HepG2 (cell line): ENCODE measurements at regions of chr19 and their contacts with region 1.

Region 1: DNA sequence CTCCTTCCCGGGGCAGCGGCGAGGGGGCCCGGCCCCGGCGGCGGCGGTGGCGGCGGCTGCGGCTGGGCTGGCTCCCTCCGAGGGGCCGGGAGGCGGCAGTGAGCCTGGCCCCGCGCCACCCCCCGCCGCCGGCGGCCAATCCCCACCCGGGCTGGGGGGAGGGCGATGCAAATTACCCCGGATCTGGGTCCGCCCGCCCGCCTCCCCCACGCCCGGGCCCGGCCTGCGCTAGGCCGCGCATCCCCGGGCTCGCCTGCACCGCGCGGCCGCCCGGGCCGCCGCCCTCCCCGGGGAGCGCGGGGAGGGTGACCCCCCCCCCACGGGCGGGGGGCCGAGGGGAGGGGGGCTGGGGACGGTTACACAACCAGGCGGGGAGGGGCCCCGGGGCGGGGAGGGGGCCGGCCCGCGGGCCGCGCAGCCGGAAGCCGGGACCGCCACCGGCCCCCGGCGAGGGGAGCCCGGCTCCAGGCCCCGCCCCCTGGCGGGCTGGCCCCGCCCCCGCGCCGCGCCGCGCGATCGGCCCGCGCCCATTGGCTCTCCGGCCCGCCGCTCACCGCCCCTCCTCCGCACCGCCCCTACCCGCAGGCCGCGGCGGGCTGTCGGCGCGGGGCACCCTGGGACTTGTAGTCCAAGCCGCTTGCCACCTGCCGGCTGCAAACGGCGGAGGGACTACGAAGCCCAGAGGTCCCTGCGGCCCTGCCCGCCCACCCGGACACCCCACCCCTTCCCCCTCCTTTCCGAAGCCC is 1.1 kb downstream of the ZBTB7A start:
- DNase-seq: peak; percentile 90
- ATAC-seq: peak; percentile 59
- H3K4me3 ChIP-seq: peak overlapping the region in 2 of 3 experiments; percentile 84 to 94; a peak in 3 of 6 replicates
- H3K27ac ChIP-seq: no peak overlapping the region
- H3K4me1 ChIP-seq: peaks cover 50% of the 10 kb centered on the region
- H3K27me3 ChIP-seq: no peaks in the 10 kb centered on the region
- CTCF ChIP-seq: no peak
- EP300 ChIP-seq: no peak
- POLR2A ChIP-seq: peak in 1 of 2 experiments; percentile 11; a peak in 1 of 4 replicates
- RAD21 ChIP-seq: no peak

Region 2: GRCh38 chr19:4035582-4035981 is 30.0 kb before region 1 on chr19:
- CTCF ChIA-PET with region 1: no interaction called
- POLR2A ChIA-PET with region 1: no interaction called
- in situ Hi-C with region 1: no loop called
- intact Hi-C with region 1: no loop called
- DNase-seq: no peak
- ATAC-seq: no peak
- H3K4me3 ChIP-seq: no peak overlapping the region
- H3K27ac ChIP-seq: no peak overlapping the region
- H3K4me1 ChIP-seq: no peaks in the 10 kb centered on the region
- H3K27me3 ChIP-seq: no peaks in the 10 kb centered on the region; a peak in 1 of 5 replicates
- CTCF ChIP-seq: no peak
- EP300 ChIP-seq: no peak
- POLR2A ChIP-seq: no peak
- RAD21 ChIP-seq: no peak

Region 3: GRCh38 chr19:4052050-4052999 is 13.3 kb before region 1 on chr19:
- CTCF ChIA-PET with region 1: no interaction called
- POLR2A ChIA-PET with region 1: interaction called, 19 read pairs
- in situ Hi-C with region 1: no loop called
- intact Hi-C with region 1: no loop called
- DNase-seq: peak; percentile 95
- ATAC-seq: peak; percentile 86
- H3K4me3 ChIP-seq: peak overlapping the region; percentile 42 to 70 (median 44); a peak in 5 of 6 replicates
- H3K27ac ChIP-seq: peak overlapping the region; percentile 99
- H3K4me1 ChIP-seq: peaks cover 33% of the 10 kb centered on the region
- H3K27me3 ChIP-seq: no peaks in the 10 kb centered on the region
- CTCF ChIP-seq: no peak; the same call in none of the 2 replicates
- EP300 ChIP-seq: peak; percentile 76 to 84; a peak in 3 of 4 replicates
- POLR2A ChIP-seq: peak; percentile 67; a peak in 3 of 4 replicates
- RAD21 ChIP-seq: peak; percentile 74

Region 4: DNA sequence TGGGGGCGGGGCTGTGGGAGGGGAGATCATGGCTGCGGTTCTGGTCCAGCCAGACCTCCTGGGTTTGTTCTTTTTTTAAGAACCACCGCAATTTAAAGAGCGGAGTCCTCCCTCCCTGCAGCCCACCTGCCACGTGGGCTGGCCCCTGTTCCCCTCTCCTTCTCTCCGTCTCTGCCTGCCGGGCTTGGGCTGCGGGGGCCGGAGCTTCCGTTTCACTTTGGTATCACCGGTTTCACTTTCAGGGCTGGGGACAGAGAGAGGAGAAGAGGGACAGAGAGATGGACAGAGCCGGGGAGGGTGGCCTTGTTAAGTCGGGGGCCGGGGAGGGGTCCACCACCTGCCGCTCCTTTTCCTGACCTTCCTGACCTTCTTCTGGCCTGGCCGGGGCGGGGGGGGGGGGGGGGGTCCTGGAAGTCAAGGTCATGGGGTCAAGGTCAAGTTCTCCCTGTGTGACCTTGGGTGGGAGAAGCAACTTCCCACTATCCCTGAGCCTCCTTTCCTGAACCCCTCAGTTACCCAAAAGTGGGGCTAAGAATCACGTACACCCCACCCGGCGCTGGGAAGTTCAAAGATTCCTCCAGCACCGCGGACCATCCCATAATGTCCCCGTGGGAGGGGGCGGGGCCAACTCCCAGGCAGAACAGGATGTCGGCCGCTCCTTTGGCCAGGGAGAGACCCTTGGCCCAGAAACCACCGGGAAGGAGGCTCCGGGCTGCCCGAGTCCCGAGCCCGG is 12.4 kb after region 1 on chr19:
- CTCF ChIA-PET with region 1: no interaction called
- POLR2A ChIA-PET with region 1: interaction called, 15 read pairs
- in situ Hi-C with region 1: no loop called
- intact Hi-C with region 1: no loop called
- DNase-seq: no peak
- ATAC-seq: peak; percentile 73
- H3K4me3 ChIP-seq: peak overlapping the region; percentile 78 to 100 (median 81)
- H3K27ac ChIP-seq: no peak overlapping the region
- H3K4me1 ChIP-seq: peaks cover 37% of the 10 kb centered on the region
- H3K27me3 ChIP-seq: no peaks in the 10 kb centered on the region
- CTCF ChIP-seq: no peak
- EP300 ChIP-seq: no peak
- POLR2A ChIP-seq: peak in 1 of 2 experiments; percentile 45; a peak in 1 of 4 replicates
- RAD21 ChIP-seq: no peak

Region 5: DNA sequence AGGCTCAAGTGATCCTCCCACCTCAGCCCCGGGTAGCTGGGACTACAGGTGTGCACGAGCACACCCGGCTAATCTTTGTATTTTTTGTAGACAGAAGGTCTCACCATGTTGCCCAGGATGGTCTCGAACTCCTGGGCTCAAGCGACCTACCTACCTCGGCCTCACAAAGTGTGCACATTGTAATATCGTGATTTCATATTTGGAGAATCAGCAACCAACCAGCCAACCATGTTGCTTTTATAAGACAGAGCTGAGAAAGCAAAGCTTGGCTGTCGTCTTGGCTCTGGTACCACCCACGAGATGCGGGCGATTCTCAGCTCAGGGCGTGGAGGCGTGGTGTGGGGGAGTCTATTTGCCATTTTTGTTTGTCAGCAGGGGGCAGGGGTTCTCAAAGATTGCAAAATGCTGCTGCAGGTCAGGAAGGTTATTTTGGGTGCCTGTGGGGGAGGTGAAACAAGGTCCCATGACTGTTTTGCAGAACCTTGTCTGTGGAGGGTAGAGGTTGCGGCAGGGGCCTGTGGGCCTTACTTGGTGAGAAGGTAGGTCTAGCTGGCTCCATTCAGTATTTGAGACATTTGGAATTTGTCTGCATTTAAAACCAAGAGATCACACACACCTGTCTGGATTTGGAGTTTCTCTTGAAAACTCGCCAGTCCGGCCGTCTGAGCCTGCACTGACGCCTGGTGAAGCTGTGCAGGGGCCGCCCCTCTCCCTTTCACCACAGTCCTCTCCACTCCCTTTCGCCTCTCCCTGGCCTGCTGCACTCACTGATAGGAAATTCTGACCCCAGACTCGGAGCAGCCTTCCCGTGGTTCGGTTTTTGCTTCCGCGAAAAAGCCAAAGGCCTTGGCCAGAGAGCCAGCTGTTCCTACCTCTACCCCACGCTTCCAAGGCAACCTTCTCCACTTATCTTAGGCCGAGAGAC is 589.1 kb after region 1 on chr19:
- CTCF ChIA-PET with region 1: no interaction called
- POLR2A ChIA-PET with region 1: no interaction called
- in situ Hi-C with region 1: no loop called
- intact Hi-C with region 1: loop called (anchors 5 kb)
- DNase-seq: peak; percentile 32
- ATAC-seq: peak; percentile 22
- H3K4me3 ChIP-seq: no peak overlapping the region
- H3K27ac ChIP-seq: peak overlapping the region; percentile 31
- H3K4me1 ChIP-seq: peaks cover 17% of the 10 kb centered on the region
- H3K27me3 ChIP-seq: no peaks in the 10 kb centered on the region
- CTCF ChIP-seq: peak; percentile 37
- EP300 ChIP-seq: peak in 1 of 2 experiments; percentile 16; a peak in 1 of 4 replicates
- POLR2A ChIP-seq: peak in 1 of 2 experiments; percentile 20; a peak in 3 of 4 replicates
- RAD21 ChIP-seq: no peak